Activated B cell treated with CpG ODN at 0.5 μM for 24 hours (primary cell): ENCODE measurements at regions of chr10 and their contacts with region 1.

Region 1: GRCh38 chr10:97210543-97210961 is 24.8 kb upstream of the SLIT1 start:
- DNase-seq: peak; percentile 57
- ATAC-seq: peak; percentile 66
- H3K4me3 Mint-ChIP-seq: no peak overlapping the region
- H3K27ac Mint-ChIP-seq: no peak overlapping the region
- H3K4me1 Mint-ChIP-seq: no peaks in the 10 kb centered on the region
- H3K27me3 Mint-ChIP-seq: peaks cover 7% of the 10 kb centered on the region
- CTCF ChIP-seq: peak; percentile 41

Region 2: DNA sequence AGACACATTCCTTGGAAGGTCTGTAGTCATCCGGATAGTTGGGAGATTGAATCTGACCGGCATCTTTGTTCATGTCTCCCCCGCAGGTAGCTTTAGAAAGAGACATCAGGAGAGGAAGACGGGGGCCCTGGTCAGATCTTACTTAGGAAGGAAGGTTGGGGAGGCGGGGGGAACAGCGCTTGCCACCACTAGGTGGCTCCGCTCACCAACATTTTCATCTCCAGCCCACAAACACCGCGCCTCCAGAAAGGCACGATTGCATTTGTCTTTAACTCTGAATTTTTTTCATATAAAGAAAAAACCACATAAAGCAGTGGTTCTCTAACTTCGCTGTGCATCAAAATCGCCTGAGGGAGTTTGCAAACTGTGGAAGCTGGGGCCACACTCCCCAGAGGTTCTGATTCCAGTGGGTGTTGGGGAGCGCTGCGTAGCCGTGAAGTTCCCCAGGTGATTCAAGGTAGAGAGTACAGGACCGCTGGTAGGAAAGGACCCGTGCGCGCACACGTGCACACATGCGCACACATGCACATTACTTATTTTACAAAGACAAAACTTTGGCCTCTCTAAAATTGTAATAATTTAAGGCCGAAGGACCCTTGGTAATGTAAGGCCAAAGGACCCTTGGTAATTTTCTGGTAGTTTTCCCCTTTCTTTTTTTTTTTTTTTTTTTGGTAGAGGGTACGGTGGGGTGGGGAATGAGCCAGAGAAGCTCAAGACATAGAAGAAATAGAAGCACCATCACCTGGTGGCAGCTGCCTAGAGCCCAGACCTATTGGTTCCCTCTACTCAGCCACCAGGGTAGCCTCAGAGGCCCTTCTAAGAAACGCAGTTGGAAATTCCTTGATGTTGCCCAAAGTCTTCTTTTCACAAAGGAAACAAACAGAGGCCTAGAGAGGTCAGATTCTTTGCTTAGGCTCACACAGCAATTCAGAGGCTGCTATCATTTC is 814.3 kb before region 1 on chr10:
- CTCF ChIA-PET with region 1: interaction called, 5 read pairs
- POLR2A ChIA-PET with region 1: no interaction called
- intact Hi-C with region 1: loop called (anchors 1 kb)
- DNase-seq: peak; percentile 42
- ATAC-seq: peak; percentile 79
- H3K4me3 Mint-ChIP-seq: no peak overlapping the region
- H3K27ac Mint-ChIP-seq: no peak overlapping the region
- H3K4me1 Mint-ChIP-seq: peaks cover 5% of the 10 kb centered on the region
- H3K27me3 Mint-ChIP-seq: peaks cover 24% of the 10 kb centered on the region
- CTCF ChIP-seq: peak; percentile 90

Region 3: DNA sequence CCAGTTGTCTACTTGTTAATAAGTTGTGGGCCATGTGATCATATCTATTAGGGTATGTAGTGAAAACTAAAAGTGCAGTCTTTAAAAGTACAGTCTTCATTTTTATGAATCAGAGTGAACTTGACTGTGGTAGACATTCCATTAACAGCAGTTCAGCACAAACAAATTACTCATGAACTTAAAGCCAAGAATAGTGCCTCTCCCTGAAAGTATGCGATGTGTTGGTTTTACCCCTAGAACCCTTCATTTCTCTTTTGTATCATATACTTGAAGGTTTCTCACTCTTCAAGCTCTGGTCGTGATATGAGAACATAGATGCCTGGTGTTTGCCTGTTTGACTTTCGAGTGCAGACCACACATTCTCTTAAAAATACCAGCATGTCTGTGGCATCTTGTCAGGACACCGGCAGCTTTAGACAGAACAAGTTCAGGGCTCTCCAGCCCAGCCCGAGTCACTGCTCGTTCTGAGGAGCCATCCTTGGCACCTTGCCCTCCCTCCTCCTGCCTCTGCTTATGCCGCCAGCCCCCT is 219.2 kb before region 1 on chr10:
- CTCF ChIA-PET with region 1: no interaction called
- POLR2A ChIA-PET with region 1: no interaction called
- intact Hi-C with region 1: no loop called
- DNase-seq: no peak
- ATAC-seq: no peak
- H3K4me3 Mint-ChIP-seq: no peak overlapping the region
- H3K27ac Mint-ChIP-seq: no peak overlapping the region
- H3K4me1 Mint-ChIP-seq: peaks cover 9% of the 10 kb centered on the region
- H3K27me3 Mint-ChIP-seq: no peaks in the 10 kb centered on the region
- CTCF ChIP-seq: no peak

Region 4: DNA sequence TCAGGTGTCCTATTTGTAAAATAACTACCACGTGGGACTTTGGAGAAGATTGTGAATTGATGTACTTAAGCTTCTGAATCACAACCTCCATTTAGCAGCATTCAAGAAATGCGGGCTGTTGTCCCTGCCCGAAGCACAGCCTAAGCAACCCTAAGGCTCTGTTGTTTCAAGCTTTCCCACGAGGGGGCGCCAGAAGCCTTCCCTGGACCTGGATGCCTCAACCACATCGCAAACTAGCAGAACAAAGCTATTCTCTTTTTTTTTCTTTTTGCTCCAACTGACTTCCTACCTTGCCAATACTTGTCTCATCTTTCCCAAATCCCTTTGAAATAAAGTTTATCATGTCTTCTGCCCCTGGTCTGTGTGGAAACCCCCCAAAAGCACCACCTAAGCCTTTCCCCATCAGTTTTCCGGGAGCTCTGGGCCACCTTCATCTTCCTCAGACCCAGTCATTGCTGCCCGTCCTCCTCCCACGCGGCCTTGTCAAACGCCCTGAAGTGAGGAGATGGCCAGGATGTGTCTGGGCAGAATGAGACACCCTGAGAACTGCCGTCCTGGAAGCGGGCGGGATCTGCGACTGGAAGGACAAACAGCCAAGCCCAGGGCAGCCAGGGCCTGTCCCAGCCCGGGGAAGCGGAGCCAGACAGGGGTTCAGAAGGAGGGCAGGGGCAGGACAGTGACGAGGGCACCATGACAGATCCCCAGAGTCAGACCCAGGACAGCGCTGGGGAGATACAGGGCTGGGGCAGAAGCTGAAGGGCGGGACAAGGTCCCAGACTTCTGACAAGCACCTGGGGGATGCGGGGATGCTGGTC is 137.5 kb before region 1 on chr10:
- CTCF ChIA-PET with region 1: interaction called, 234 read pairs
- POLR2A ChIA-PET with region 1: interaction called, 4 read pairs
- intact Hi-C with region 1: loop called (anchors 1 kb)
- DNase-seq: peak; percentile 69
- ATAC-seq: peak; percentile 76
- H3K4me3 Mint-ChIP-seq: no peak overlapping the region
- H3K27ac Mint-ChIP-seq: no peak overlapping the region
- H3K4me1 Mint-ChIP-seq: no peaks in the 10 kb centered on the region
- H3K27me3 Mint-ChIP-seq: peaks cover 42% of the 10 kb centered on the region
- CTCF ChIP-seq: no peak

Region 5: DNA sequence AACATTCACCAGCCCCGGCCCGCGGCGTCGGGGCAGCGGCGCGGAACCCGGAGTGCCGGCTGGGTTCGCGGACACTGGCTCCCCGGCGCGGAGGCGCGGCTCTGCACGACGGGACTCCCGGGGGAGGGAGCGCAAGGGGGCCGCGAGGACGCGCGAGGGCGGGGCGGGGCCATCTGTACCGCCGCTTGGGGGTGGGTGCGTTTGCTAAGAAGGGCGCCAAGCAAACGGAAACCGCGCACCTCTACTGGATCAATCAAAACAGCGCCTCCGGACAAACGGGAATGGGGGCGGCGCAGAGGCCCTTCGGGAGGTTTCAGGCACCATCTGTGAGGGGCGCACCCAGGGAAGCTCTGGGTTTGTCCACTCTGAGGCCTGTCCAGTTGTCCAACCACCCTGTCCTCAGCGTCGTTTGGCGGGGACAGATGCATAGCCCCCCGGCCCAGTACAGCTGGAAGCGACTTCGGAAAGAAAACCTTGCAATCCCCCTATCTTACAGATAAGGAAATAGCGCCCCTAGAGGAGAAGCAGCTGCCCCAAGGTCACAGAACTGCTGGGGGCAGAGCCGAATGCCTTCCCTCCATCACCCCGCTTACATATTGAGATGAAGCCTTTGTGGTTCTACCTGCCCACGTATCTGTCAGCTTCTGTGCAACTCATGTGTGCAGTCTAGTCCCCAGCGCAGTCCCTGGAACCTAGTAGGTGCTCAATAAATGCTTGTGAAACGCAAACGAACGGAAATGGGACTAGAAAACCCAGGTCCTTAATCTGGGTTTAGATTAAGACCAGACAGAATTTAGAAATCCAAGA is 14.1 kb before region 1 on chr10:
- CTCF ChIA-PET with region 1: interaction called, 55 read pairs
- POLR2A ChIA-PET with region 1: no interaction called
- intact Hi-C with region 1: loop called (anchors 1 kb)
- DNase-seq: peak; percentile 45
- ATAC-seq: peak; percentile 75
- H3K4me3 Mint-ChIP-seq: peak overlapping the region; percentile 82
- H3K27ac Mint-ChIP-seq: no peak overlapping the region
- H3K4me1 Mint-ChIP-seq: peaks cover 33% of the 10 kb centered on the region
- H3K27me3 Mint-ChIP-seq: peaks cover 27% of the 10 kb centered on the region
- CTCF ChIP-seq: peak; percentile 65

Region 6: DNA sequence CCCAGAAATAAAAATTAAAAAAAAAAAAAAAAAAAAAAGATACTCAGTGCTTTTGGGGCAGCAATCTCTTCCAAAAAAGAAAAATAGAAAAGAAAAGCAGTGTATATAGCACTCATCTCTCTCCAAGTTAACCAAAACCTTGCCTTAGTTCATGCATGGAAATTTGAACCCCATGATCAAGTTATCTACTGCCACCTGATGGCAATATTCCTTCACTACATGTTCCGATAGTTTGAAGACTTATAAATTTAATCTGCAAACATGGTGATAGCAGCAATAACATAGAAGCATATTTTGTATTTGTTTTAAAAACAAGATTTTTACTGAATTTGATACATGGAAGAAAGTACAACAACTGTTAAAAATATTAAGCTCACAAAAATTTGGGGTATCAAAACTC is 23.8 kb after region 1 on chr10:
- CTCF ChIA-PET with region 1: interaction called, 5 read pairs
- POLR2A ChIA-PET with region 1: no interaction called
- intact Hi-C with region 1: loop called (anchors 1 kb)
- DNase-seq: no peak
- ATAC-seq: no peak
- H3K4me3 Mint-ChIP-seq: no peak overlapping the region
- H3K27ac Mint-ChIP-seq: no peak overlapping the region
- H3K4me1 Mint-ChIP-seq: peaks cover 3% of the 10 kb centered on the region
- H3K27me3 Mint-ChIP-seq: no peaks in the 10 kb centered on the region
- CTCF ChIP-seq: no peak

Region 7: DNA sequence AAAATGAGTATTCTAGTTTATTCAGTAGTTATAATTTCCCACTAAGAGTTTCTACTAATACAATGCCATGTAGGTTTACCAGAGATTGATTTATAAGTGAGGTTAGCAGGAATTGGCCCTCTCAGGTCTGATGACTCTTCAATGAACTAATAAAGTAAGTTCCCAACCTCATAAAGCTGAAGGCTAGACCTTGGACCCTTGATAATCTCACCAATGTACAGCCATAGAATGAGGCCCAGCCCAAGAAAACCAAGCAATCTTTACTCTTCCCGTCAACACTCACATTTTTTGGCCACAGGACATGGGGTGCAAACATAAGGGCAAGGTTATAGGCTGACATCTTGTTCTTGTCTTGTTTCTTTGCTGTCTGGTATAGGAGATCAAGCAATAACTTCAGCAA is 48.6 kb after region 1 on chr10:
- CTCF ChIA-PET with region 1: no interaction called
- POLR2A ChIA-PET with region 1: no interaction called
- intact Hi-C with region 1: no loop called
- DNase-seq: no peak
- ATAC-seq: no peak
- H3K4me3 Mint-ChIP-seq: no peak overlapping the region
- H3K27ac Mint-ChIP-seq: no peak overlapping the region
- H3K4me1 Mint-ChIP-seq: no peaks in the 10 kb centered on the region
- H3K27me3 Mint-ChIP-seq: no peaks in the 10 kb centered on the region
- CTCF ChIP-seq: no peak

Region 8: DNA sequence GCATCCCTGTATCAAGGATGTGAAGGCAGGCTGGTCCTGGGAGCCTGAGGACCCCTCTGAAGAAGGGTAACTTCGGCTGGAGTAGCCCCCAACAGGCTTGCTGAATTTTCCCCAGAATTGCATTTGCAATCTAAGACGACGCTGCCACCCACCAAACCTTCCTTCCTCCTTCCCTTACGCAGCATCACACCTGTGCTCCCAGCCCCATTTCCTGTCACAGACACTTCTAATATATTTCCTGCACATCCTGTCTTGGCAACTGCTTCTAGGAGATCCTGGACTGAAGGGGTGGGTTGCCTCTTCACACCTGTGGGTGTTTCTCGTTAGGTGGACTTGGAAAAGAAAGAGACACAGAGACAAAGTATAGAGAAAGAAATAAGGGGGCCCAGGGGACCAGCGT is 206.0 kb after region 1 on chr10:
- CTCF ChIA-PET with region 1: no interaction called
- POLR2A ChIA-PET with region 1: no interaction called
- intact Hi-C with region 1: no loop called
- DNase-seq: no peak
- ATAC-seq: no peak
- H3K4me3 Mint-ChIP-seq: no peak overlapping the region
- H3K27ac Mint-ChIP-seq: peak overlapping the region; percentile 57
- H3K4me1 Mint-ChIP-seq: peaks cover 29% of the 10 kb centered on the region
- H3K27me3 Mint-ChIP-seq: no peaks in the 10 kb centered on the region
- CTCF ChIP-seq: no peak

Region 9: GRCh38 chr10:97596101-97597062 is 385.8 kb after region 1 on chr10:
- CTCF ChIA-PET with region 1: no interaction called
- POLR2A ChIA-PET with region 1: no interaction called
- intact Hi-C with region 1: no loop called
- DNase-seq: no peak
- ATAC-seq: no peak
- H3K4me3 Mint-ChIP-seq: no peak overlapping the region
- H3K27ac Mint-ChIP-seq: no peak overlapping the region
- H3K4me1 Mint-ChIP-seq: no peaks in the 10 kb centered on the region
- H3K27me3 Mint-ChIP-seq: no peaks in the 10 kb centered on the region
- CTCF ChIP-seq: no peak